ENCODE measurements at regions of chr4 and their contacts with region 1.

Region 1: GRCh38 chr4:67907650-67908049 is 23.8 kb upstream of the TMPRSS11D start:
- DNase-seq: no peak

Region 2: DNA sequence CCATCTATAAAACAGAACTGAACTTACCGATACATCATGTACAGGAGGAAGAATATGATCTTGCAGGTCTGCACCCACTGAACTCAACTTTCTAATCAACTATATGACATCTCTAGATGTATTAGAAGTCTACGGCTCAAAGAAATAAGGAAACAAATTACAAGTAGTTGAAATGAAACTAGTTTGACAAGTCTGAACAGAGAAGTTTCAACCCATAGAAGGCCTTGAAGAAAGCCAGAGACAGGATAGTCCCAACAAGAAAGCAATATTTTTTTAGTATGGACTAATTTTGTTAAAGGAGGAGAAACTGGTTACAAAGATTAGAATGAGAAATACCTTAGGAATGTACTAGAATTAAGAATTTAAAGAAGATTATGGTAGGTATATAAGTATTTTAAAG is 55.7 kb after region 1 on chr4 and contains the start of gene TMPRSS11A:
- intact Hi-C with region 1: loop called in 1 of 2 experiments (anchors 2 kb)
- DNase-seq: no peak
- total RNA-seq, gene TMPRSS11A: not detected

Measured in posterior vena cava (tissue), 2 donors.